ENCODE measurements at regions of chrX and their contacts with region 1.

Region 1: DNA sequence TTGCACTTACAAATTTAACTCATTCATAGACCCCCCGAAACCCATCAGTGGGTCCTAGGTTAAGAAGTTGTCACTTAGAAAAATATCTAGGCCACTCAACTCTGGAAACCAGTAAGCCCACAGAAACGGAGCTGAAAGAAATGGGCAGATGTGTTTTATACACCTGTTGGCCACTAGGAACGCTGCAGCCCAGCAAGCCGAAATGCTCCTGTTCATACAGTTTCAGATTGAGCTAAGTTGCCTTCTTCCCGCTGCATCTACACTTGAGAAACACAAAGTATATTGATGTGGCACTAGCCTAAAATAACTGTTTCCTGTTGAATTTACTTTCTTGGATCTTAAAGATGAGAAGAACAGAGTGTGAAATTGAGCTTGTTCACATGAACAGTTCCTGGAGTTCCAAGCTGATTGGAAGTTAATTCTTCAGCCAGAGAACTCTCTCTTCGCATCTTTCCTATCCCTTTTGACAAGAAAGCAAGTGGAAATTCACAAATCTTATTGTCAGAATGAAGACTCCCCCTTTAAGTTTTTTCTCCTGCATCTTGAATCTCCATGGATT is 174.1 kb downstream of the RBMX2 start:
- DNase-seq: peak; percentile 38
- CTCF ChIP-seq: peak; percentile 38

Region 2: GRCh38 chrX:130555341-130555740 is 20.6 kb before region 1 on chrX:
- CTCF ChIA-PET with region 1: no interaction called
- POLR2A ChIA-PET with region 1: no interaction called
- DNase-seq: no peak
- CTCF ChIP-seq: no peak

Region 3: GRCh38 chrX:130680164-130681035 is 104.5 kb after region 1 on chrX:
- CTCF ChIA-PET with region 1: no interaction called
- POLR2A ChIA-PET with region 1: no interaction called
- DNase-seq: no peak
- CTCF ChIP-seq: no peak

Region 4: DNA sequence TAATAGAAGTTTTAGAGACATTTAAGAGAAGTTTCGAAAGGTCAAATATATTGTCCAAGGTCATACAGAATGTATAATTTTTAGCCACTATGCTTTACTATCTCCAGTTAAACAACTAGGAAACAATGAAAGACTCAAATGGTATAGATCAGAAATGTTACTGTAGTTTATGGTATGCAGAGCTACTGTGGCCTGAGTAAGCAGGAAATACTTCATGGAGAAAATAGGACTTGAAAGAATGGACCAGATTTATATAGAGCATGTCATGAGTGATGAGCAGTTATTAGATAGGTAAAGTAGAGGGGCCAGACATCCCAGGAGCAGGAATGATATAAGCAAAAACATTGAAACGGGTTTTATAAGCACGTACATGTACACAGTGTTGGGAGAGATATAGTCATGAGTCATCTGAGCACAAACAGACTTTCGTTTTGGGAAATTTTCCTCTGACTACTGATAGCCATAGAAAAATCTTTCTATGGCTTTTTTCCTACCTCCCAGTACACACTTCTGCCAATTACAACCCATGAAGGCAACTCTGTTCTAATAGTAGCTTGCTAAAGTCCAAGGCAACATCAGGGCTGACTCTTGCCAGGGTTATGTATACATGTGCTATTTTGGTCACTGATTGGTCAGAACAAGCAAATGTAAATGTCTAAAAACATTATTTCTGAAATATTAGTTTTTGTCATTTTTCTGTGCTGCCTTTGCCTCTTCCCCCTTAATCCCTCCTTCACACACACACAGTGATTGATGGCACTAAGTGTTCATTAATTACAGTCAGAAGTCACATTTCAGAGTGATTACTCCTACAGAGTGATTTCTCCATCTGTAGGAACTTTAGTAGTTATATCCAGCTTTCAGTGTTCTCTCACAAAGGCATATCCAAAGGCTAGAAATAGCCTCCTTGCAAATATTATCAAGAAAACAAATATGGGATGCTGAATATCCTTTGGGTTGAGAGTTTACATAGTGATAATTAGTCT is 128.4 kb after region 1 on chrX:
- CTCF ChIA-PET with region 1: no interaction called
- POLR2A ChIA-PET with region 1: no interaction called
- DNase-seq: no peak
- CTCF ChIP-seq: no peak

Region 5: GRCh38 chrX:130902783-130903613 is 327.1 kb after region 1 on chrX and contains the start of gene ENOX2:
- CTCF ChIA-PET with region 1: interaction called, 11 read pairs
- POLR2A ChIA-PET with region 1: no interaction called
- DNase-seq: peak; percentile 81
- CTCF ChIP-seq: no peak